Aorta (tissue), 5 donors: ENCODE measurements at regions of chr13 and their contacts with region 1.

Region 1: DNA sequence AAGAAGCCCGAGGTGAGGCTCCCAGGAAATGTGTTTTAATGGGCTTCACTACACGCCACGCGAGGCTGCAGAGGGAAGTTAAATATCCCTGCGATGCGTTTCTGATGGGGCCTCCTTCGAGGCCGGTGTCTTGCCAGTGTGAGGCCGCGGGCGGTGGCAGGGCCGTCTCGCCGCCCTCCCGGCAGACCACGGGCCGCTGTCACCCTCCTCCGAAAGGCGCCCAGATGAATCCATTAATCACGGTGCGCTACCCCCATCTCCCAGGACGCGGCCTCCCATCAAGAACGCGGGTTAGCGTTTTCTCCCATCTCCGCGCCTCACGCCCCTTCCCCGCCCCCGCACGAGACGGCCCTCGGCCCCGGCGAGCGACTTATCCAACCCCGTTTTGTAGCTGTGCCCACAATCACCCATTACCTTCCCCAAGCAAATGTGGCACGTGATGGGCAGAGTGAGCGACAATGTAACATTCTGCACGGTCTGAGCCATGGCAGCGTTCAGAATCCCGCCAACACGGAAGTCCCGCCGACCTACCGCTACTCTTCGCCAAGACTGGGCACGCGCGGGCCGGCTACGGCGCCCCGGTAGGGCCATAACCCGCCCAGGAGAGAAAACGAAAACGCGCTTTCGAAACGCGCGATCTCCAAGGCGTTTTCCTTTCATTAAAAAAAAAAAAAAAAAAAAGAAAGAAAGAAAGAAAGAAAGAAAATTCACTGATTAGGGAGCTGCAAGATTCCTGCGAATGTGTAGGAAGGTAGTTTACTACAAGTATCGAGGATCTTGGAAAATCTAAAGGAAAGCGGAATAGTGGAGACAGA is at the start of gene OBI1:
- DNase-seq: peak; percentile 94 to 97
- ATAC-seq: peak; percentile 99
- H3K4me3 ChIP-seq: peak within 1 kb of the TSS; percentile 62 to 96
- H3K27ac ChIP-seq: no peak within 1 kb of the TSS
- H3K4me1 ChIP-seq: peaks cover 0 to 2% of the 10 kb centered on the region in 2 donors
- H3K27me3 ChIP-seq: no peaks in the 10 kb centered on the region
- total RNA-seq, gene OBI1: 7.9 to 10.7 TPM

Region 2: DNA sequence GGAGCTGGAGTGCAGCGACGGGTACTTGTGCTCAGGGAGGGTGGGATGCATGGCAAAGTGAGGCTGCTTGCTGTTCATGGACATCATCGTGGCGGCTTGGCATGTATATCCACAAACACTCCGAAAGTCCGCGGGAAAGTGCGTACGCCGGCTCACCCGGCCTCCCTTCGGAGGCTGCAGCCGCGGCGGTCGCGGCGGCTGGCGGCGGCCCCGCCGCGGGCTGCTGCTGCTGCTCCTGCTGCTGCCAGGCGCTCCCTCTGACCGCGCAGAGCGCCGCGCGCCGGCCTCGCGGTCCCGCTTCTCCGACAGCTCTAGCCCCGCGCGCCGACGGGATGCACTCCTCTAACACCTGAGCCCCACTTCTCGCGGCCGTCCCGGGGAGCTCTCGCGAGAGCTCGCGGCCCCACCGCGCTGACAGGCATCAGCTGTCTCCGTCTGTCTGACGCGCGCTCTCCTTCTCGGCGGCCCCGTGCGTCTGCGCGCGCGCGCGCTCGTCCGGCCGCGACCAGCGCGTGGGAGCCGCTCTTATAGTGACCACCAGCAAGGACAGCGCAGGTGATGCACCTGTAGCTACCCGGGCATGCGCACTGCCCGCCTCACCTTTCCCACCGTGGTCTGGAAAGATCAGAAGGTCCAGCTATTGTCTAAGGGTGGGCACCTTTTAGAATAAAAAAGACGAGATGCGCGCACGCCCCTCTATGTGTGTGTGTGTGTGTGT is 55.4 kb before region 1 on chr13 and contains the start of gene POU4F1:
- intact Hi-C with region 1: loop called in 1 of 2 experiments (anchors 10 kb)
- DNase-seq: peak in 1 of 2 donors; percentile 77
- ATAC-seq: peak; percentile 5
- H3K4me3 ChIP-seq: no peak within 1 kb of the TSS
- H3K27ac ChIP-seq: no peak within 1 kb of the TSS
- H3K4me1 ChIP-seq: no peaks in the 10 kb centered on the region
- H3K27me3 ChIP-seq: peaks cover 0 to 1% of the 10 kb centered on the region in 2 donors
- total RNA-seq, gene POU4F1: 0.45 TPM in 1 of 2 donors, not detected in the other

Region 3: DNA sequence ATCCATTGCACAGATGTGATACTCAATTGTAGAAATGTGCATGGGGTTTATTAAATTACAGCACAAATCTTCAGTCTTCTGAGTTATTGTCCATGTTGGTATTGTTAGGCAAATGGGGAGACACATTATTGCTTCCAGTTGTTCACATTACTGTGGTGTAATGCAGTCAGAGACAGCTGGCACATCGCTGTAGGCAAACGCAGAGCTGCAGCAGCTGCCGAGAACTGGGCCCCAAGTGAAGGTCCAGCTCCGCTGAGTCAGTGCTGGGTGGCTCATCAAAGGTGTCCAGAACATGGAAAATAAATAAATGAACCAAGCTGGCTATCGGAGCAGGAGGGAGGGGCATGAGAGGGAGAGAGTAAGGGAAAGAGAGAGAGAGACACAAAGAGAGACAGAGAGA is 299.2 kb after region 1 on chr13:
- intact Hi-C with region 1: no loop called
- DNase-seq: no peak
- ATAC-seq: no peak
- H3K4me3 ChIP-seq: no peak overlapping the region
- H3K27ac ChIP-seq: no peak overlapping the region
- H3K4me1 ChIP-seq: no peaks in the 10 kb centered on the region
- H3K27me3 ChIP-seq: peaks cover 0 to 2% of the 10 kb centered on the region in 2 donors

Region 4: DNA sequence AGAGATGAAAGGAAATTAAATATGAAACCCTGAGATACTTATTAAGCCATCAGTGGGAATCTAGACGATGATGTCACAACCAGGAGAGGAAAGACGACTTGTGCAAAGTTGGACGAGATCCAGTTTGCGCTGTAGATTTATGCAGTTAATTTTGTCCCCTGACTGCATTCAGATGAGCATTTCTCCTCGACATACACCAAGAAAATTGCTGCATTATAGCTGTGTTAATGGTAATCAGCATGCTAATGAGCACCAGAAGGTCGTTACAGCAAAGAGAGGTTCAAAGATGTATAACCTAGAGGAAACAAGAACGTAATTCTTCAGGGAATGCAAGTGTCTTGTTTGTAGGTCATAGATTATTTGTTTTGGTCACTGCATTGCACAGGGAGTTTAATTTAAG is 375.5 kb after region 1 on chr13:
- intact Hi-C with region 1: no loop called
- DNase-seq: no peak
- ATAC-seq: no peak
- H3K4me3 ChIP-seq: no peak overlapping the region
- H3K27ac ChIP-seq: no peak overlapping the region
- H3K4me1 ChIP-seq: no peaks in the 10 kb centered on the region
- H3K27me3 ChIP-seq: no peaks in the 10 kb centered on the region